Activated CD4-positive, alpha-beta T cell treated with anti-CD3 and anti-CD28 coated beads for 36 hours (primary cell): ENCODE measurements at regions of chr6 and their contacts with region 1.

Region 1: DNA sequence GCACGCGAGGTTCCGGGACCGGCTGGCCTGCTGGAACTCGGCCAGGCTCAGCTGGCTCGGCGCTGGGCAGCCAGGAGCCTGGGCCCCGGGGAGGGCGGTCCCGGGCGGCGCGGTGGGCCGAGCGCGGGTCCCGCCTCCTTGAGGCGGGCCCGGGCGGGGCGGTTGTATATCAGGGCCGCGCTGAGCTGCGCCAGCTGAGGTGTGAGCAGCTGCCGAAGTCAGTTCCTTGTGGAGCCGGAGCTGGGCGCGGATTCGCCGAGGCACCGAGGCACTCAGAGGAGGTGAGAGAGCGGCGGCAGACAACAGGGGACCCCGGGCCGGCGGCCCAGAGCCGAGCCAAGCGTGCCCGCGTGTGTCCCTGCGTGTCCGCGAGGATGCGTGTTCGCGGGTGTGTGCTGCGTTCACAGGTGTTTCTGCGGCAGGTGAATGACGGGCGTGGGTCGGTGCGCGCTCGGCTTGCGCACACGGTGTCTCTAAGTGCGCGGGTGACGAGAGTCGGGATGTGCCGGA is at the start of gene CDKN1A:
- DNase-seq: peak; percentile 88
- ATAC-seq: peak; percentile 61
- H3K4me3 Mint-ChIP-seq: peak within 1 kb of the TSS; percentile 85
- H3K27ac Mint-ChIP-seq: peak within 1 kb of the TSS; percentile 86
- H3K4me1 Mint-ChIP-seq: peaks cover 45% of the 10 kb centered on the region
- H3K27me3 Mint-ChIP-seq: peaks cover 12% of the 10 kb centered on the region
- total RNA-seq, gene CDKN1A: 31.3 to 35.9 TPM

Region 2: GRCh38 chr6:36075656-36076055 is 602.9 kb before region 1 on chr6:
- CTCF ChIA-PET with region 1: no interaction called
- POLR2A ChIA-PET with region 1: no interaction called
- intact Hi-C with region 1: no loop called
- DNase-seq: no peak
- ATAC-seq: no peak
- H3K4me3 Mint-ChIP-seq: no peak overlapping the region
- H3K27ac Mint-ChIP-seq: no peak overlapping the region
- H3K4me1 Mint-ChIP-seq: peaks cover 26% of the 10 kb centered on the region
- H3K27me3 Mint-ChIP-seq: no peaks in the 10 kb centered on the region

Region 3: DNA sequence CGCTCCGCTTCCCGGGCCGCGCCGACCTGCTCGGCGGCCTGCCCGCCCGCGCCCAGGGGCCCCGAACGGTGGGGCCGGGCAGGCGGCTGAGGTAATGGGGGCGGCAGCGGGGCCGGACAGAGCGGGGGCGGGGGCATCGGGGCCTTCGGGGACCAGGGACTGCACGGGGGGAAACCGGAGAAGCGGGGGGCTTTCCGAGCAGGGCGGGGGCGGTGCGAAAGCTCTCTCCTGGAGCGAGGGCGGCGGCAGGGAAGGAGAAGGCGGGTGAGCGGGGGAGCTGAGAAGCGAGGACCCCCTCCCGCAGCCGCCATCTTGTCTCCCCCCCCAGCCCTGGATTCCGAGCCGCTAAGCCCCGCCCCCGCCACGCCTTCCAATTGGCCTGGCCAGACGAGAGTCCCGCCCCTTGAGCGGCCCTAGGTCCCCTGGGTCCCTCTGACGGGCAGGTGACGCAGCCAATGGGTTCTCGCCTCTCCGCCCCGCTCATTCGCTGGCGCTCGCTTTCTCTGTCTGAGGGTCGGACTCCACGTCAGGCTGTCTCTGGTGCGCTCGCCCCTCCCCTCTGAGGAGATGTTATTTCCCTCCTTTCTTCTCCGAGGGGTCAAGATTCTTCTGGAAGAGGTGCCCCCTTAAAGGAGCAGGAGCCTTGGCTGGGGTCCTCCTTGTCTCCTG is 481.6 kb before region 1 on chr6:
- CTCF ChIA-PET with region 1: no interaction called
- POLR2A ChIA-PET with region 1: no interaction called
- intact Hi-C with region 1: loop called in 1 of 2 experiments (anchors 5 kb)
- DNase-seq: peak; percentile 100
- ATAC-seq: peak; percentile 96
- H3K4me3 Mint-ChIP-seq: peak overlapping the region; percentile 82
- H3K27ac Mint-ChIP-seq: peak overlapping the region; percentile 90
- H3K4me1 Mint-ChIP-seq: peaks cover 45% of the 10 kb centered on the region
- H3K27me3 Mint-ChIP-seq: no peaks in the 10 kb centered on the region

Region 4: GRCh38 chr6:36442671-36443470 is 235.7 kb before region 1 on chr6 and contains the starts of genes KCTD20 and PXT1:
- CTCF ChIA-PET with region 1: no interaction called
- POLR2A ChIA-PET with region 1: no interaction called
- intact Hi-C with region 1: loop called (anchors 1 to 5 kb)
- DNase-seq: peak; percentile 94
- ATAC-seq: peak; percentile 78
- H3K4me3 Mint-ChIP-seq: peak within 1 kb of the TSS; percentile 95
- H3K27ac Mint-ChIP-seq: peak within 1 kb of the TSS; percentile 97
- H3K4me1 Mint-ChIP-seq: peaks cover 27% of the 10 kb centered on the region
- H3K27me3 Mint-ChIP-seq: no peaks in the 10 kb centered on the region
- total RNA-seq, gene KCTD20: 46.5 to 50.6 TPM
- total RNA-seq, gene PXT1: 0.11 to 0.14 TPM

Region 5: GRCh38 chr6:36599791-36600209 is 78.8 kb before region 1 on chr6:
- CTCF ChIA-PET with region 1: no interaction called
- POLR2A ChIA-PET with region 1: interaction called, 4 read pairs
- intact Hi-C with region 1: loop called (anchors 1 to 5 kb)
- DNase-seq: peak; percentile 86
- ATAC-seq: peak; percentile 91
- H3K4me3 Mint-ChIP-seq: peak overlapping the region; percentile 88
- H3K27ac Mint-ChIP-seq: peak overlapping the region; percentile 90
- H3K4me1 Mint-ChIP-seq: peaks cover 66% of the 10 kb centered on the region
- H3K27me3 Mint-ChIP-seq: no peaks in the 10 kb centered on the region

Region 6: GRCh38 chr6:36694616-36695015 is 16.0 kb after region 1 on chr6:
- CTCF ChIA-PET with region 1: interaction called, 10 read pairs
- POLR2A ChIA-PET with region 1: interaction called, 4 read pairs
- intact Hi-C with region 1: loop called (anchors 1 kb)
- DNase-seq: no peak
- ATAC-seq: no peak
- H3K4me3 Mint-ChIP-seq: no peak overlapping the region
- H3K27ac Mint-ChIP-seq: peak overlapping the region; percentile 67
- H3K4me1 Mint-ChIP-seq: peaks cover 41% of the 10 kb centered on the region
- H3K27me3 Mint-ChIP-seq: no peaks in the 10 kb centered on the region

Region 7: GRCh38 chr6:36885461-36886401 is 207.2 kb after region 1 on chr6 and contains the start of gene C6orf89:
- CTCF ChIA-PET with region 1: no interaction called
- POLR2A ChIA-PET with region 1: no interaction called
- intact Hi-C with region 1: loop called in 1 of 2 experiments (anchors 1 kb)
- DNase-seq: peak; percentile 99
- ATAC-seq: peak; percentile 100
- H3K4me3 Mint-ChIP-seq: peak within 1 kb of the TSS; percentile 89
- H3K27ac Mint-ChIP-seq: peak within 1 kb of the TSS; percentile 97
- H3K4me1 Mint-ChIP-seq: peaks cover 31% of the 10 kb centered on the region
- H3K27me3 Mint-ChIP-seq: no peaks in the 10 kb centered on the region
- total RNA-seq, gene C6orf89: 29.5 to 36.2 TPM

Region 8: DNA sequence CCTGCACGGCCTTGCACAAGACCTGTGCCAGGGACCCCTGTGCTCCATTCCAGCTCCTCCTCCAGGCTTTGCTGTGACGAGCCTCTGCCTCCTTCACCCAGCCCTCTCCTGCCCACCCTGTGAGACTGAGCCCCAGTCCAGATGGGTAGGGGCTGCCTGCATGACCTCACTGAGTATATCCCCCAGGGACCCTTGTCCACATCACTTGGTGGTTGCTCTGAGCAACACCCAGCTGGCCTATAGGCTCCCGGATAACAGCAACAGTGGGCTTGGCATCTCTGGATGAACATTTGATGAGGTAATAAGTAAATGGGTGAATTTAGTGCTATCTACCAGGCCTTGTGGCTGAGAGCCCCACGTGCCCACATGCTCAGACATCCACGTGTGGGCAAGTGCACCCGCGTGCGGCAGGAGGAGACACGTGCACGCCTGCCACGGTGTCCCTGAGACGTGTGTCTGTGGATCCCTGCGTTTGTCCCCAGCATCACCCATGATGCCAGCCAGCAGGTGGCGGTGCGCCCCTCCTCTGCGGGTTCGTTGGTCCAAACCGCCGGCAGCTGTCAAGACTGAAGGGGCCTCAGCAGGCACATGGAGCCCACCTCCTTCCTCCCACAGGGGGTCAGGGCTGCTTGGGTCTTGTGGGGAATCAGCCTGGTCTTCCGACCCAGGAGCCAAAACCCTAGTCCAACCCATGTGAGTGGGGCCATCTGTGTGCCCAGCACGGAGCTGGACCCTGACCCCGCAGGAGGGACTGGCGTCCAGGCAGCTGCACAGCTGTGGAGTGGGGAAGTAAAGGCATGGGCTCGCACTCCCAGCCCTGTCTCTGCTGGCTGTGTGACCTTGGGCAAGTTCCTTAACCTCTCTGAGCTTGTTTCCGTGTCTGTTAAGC is 372.8 kb after region 1 on chr6:
- CTCF ChIA-PET with region 1: no interaction called
- POLR2A ChIA-PET with region 1: no interaction called
- intact Hi-C with region 1: loop called in 1 of 2 experiments (anchors 5 kb)
- DNase-seq: peak; percentile 95
- ATAC-seq: peak; percentile 43
- H3K4me3 Mint-ChIP-seq: peak overlapping the region; percentile 79
- H3K27ac Mint-ChIP-seq: peak overlapping the region; percentile 100
- H3K4me1 Mint-ChIP-seq: peaks cover 55% of the 10 kb centered on the region
- H3K27me3 Mint-ChIP-seq: no peaks in the 10 kb centered on the region